ENCODE measurements at regions of chr19 and their contacts with region 1.

Region 1: GRCh38 chr19:1490311-1491113 is at the start of gene PCSK4:
- DNase-seq: peak; percentile 94
- ATAC-seq: peak; percentile 83
- H3K4me3 Mint-ChIP-seq: peak within 1 kb of the TSS; percentile 89
- H3K27ac Mint-ChIP-seq: peak within 1 kb of the TSS; percentile 88
- H3K4me1 Mint-ChIP-seq: peaks cover 12% of the 10 kb centered on the region
- H3K27me3 Mint-ChIP-seq: peaks cover 5% of the 10 kb centered on the region
- CTCF ChIP-seq: no peak
- total RNA-seq, gene PCSK4: 1.2 and 1.3 TPM in 2 replicates

Region 2: DNA sequence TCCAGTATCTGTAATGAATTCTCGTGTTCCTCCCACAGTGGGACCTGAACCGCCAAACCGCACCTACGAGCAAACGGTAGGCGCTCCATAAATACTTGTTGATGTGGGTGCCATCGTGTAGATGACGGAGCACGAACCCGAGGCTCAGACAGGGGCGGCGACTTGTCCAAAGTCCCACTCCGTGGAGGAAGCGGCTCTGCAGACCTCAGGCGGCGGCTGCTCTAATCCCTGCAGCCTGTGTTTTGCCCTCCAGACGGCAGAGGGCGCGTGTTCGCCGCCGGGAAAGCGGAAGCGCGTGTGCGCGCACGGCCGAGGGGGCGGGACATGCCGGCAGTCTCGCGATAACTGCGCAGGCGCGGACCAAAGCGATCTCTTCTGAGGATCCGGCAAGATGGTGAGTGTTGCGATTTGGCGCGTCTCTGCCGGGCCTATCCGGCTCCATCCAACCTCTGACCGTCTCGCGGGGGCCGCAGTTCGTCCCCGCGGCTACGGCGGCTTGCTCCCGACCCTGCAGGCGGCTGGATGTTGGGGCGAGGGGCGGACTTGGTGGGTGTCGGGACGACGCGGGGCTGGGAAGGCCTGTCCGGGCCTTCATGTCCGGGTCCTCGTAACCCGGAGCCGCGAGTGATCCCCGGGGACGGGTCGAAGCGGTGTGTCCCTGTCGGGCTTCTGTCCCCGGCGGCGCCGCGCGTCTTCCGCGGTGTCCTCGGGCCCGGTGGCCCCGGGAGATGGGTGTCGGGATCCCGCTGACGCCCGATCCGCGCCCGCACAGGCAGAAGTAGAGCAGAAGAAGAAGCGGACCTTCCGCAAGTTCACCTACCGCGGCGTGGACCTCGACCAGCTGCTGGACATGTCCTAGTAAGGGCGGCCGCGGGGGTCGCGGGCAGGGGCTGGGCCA is 52.2 kb before region 1 on chr19 and contains the start of gene RPS15:
- CTCF ChIA-PET with region 1: no interaction called
- POLR2A ChIA-PET with region 1: no interaction called
- intact Hi-C with region 1: loop called (anchors 1 kb)
- DNase-seq: peak; percentile 94
- ATAC-seq: peak; percentile 92
- H3K4me3 Mint-ChIP-seq: peak within 1 kb of the TSS; percentile 99
- H3K27ac Mint-ChIP-seq: peak within 1 kb of the TSS; percentile 99
- H3K4me1 Mint-ChIP-seq: peaks cover 26% of the 10 kb centered on the region
- H3K27me3 Mint-ChIP-seq: no peaks in the 10 kb centered on the region
- CTCF ChIP-seq: no peak
- total RNA-seq, gene RPS15: 1,788 and 2,029 TPM in 2 replicates

Region 3: GRCh38 chr19:1478934-1479707 is 11.4 kb before region 1 on chr19 and contains the start of gene C19orf25:
- CTCF ChIA-PET with region 1: no interaction called
- POLR2A ChIA-PET with region 1: interaction called, 5 read pairs
- intact Hi-C with region 1: loop called (anchors 1 kb)
- DNase-seq: peak; percentile 89
- ATAC-seq: peak; percentile 93
- H3K4me3 Mint-ChIP-seq: peak within 1 kb of the TSS; percentile 98
- H3K27ac Mint-ChIP-seq: peak within 1 kb of the TSS; percentile 95
- H3K4me1 Mint-ChIP-seq: peaks cover 18% of the 10 kb centered on the region
- H3K27me3 Mint-ChIP-seq: no peaks in the 10 kb centered on the region
- CTCF ChIP-seq: no peak
- total RNA-seq, gene C19orf25: 42.8 and 55.7 TPM in 2 replicates

Region 4: DNA sequence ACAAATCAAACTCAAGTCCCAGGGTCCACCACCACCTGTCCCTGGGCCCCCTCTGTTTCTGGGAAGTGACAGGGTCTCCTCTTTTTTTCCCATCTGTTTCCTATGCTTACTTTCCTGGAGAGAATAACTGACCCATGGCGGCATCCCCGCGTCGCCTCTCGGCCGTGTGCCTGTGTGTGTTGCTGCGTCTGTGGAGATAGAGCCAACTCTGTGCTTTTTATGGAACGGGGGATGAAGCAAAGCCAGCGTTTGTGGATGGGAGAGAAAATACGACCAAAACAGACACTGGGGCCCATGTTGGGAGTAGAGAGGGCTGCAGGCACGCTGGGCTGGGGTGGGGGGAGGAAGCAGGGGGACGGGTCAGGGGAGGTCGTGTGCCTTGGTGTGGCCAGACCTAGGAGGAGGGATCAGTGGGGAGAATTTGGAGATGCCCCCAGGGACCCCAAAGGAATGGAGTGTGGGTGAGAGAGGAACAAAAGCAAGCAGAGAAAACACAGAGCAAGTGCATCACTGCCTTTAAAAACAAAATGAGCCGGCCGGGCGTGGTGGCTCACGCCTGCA is 49.9 kb after region 1 on chr19:
- CTCF ChIA-PET with region 1: no interaction called
- POLR2A ChIA-PET with region 1: no interaction called
- intact Hi-C with region 1: no loop called
- DNase-seq: no peak
- ATAC-seq: no peak
- H3K4me3 Mint-ChIP-seq: no peak overlapping the region
- H3K27ac Mint-ChIP-seq: no peak overlapping the region
- H3K4me1 Mint-ChIP-seq: no peaks in the 10 kb centered on the region
- H3K27me3 Mint-ChIP-seq: peaks cover 18% of the 10 kb centered on the region
- CTCF ChIP-seq: no peak

Region 5: GRCh38 chr19:1929021-1929742 is 438.7 kb after region 1 on chr19:
- CTCF ChIA-PET with region 1: no interaction called
- POLR2A ChIA-PET with region 1: interaction called, 10 read pairs
- intact Hi-C with region 1: no loop called
- DNase-seq: peak; percentile 86
- ATAC-seq: peak; percentile 82
- H3K4me3 Mint-ChIP-seq: peak overlapping the region; percentile 81
- H3K27ac Mint-ChIP-seq: no peak overlapping the region
- H3K4me1 Mint-ChIP-seq: peaks cover 46% of the 10 kb centered on the region
- H3K27me3 Mint-ChIP-seq: no peaks in the 10 kb centered on the region
- CTCF ChIP-seq: peak; percentile 59

Measured in activated B cell treated with CpG ODN at 0.5 μM for 24 hours (primary cell).